Activated naive CD8-positive, alpha-beta T cell treated with anti-CD3 and anti-CD28 coated beads, Interleukin-2, amount 10 ng/mL, durations not matched to agents 7 days and 5 days (primary cell): ENCODE measurements at regions of chr15 and their contacts with region 1.

Region 1: DNA sequence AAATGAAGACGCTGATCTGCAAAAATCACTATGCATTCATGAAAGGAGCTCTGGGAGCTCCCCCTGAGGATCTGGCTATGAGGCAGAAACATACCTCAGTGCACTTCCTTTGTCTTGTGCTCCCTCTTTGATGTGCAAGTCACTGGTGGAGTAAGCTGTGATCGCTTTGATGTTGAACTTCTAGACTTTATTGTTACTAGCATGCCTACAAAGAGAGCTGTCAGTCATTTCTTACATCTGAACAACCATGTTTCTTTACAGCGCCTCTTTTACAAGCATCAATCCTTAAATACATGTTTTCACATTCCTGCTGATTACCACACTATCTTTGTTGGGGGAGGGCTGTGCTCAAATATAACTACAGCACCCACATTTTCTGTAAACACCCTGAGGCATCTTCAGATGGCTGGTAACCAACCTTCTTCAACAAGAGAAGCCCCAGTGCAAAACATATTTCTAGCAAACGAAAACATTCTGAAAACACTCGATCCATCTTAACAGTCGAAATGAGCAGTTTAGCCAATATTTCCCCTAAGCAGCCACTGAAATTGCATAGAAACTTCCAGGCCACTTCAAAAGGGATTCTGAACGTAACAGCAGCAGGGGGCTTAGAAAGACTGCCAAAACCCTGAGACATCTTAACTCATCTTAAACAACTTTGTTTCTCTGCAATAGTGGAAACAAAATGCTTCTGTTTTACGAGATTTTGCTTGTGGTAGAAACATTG is 101.9 kb upstream of the ICE2 start:
- DNase-seq: no peak
- ATAC-seq: peak; percentile 84
- H3K4me3 Mint-ChIP-seq: peak overlapping the region; percentile 77
- H3K27ac Mint-ChIP-seq: peak overlapping the region; percentile 93
- H3K4me1 Mint-ChIP-seq: peaks cover 65% of the 10 kb centered on the region
- H3K27me3 Mint-ChIP-seq: no peaks in the 10 kb centered on the region

Region 2: DNA sequence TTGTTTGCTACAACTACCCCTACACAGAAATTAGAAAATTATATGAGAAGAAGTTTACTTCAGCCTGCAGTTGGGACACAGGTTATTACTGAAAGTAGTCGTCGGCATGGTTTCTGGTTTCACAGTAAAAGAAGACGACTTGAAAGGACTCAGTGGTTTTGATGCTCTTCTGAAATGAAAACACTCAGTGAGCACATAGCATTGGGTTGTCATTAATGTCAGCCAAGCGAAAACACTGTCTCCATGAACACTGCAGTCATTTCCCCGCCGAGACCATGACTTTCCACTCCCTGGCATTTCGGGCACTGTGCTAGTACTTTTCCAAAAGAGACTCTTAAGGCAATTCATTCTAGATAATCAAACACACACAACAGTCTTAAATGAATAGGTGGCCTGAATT is 32.7 kb before region 1 on chr15:
- POLR2A ChIA-PET with region 1: interaction called, 25 read pairs
- DNase-seq: no peak
- ATAC-seq: peak; percentile 76
- H3K4me3 Mint-ChIP-seq: peak overlapping the region; percentile 82
- H3K27ac Mint-ChIP-seq: peak overlapping the region; percentile 98
- H3K4me1 Mint-ChIP-seq: peaks cover 84% of the 10 kb centered on the region
- H3K27me3 Mint-ChIP-seq: no peaks in the 10 kb centered on the region

Region 3: GRCh38 chr15:60592371-60593169 is 11.8 kb after region 1 on chr15:
- POLR2A ChIA-PET with region 1: interaction called, 10 read pairs
- DNase-seq: peak; percentile 87
- ATAC-seq: peak; percentile 90
- H3K4me3 Mint-ChIP-seq: peak overlapping the region; percentile 87
- H3K27ac Mint-ChIP-seq: peak overlapping the region; percentile 84
- H3K4me1 Mint-ChIP-seq: peaks cover 45% of the 10 kb centered on the region
- H3K27me3 Mint-ChIP-seq: no peaks in the 10 kb centered on the region